Right cardiac atrium (tissue), 5 donors: ENCODE measurements at regions of chr17 and their contacts with region 1.

Region 1: DNA sequence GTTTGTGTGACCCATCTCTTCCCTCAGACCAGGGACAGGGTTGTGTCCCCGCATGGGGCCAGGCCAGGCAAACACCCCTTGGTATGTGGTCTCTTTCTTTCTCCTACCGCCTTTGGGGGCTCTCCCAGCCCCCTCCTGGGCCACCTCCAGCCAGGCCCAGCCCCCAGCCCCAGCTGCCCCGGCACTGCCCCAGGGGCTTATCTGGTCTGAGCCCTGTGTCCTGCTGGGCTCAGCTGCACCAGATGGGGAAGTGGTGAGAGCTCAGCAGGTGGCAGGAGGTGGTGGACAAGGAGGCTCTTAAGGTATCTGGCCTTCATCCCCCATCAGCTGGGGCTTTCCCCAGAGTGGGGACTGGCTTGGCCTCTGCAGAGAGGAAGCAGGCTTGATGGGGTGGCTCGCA is 8.7 kb downstream of the ADAM11 start:
- DNase-seq: peak in 2 of 3 donors; percentile 11 to 53
- ATAC-seq: no peak
- H3K4me3 ChIP-seq: no peak overlapping the region
- H3K27ac ChIP-seq: no peak overlapping the region
- H3K4me1 ChIP-seq: no peaks in the 10 kb centered on the region
- H3K27me3 ChIP-seq: no peaks in the 10 kb centered on the region

Region 2: DNA sequence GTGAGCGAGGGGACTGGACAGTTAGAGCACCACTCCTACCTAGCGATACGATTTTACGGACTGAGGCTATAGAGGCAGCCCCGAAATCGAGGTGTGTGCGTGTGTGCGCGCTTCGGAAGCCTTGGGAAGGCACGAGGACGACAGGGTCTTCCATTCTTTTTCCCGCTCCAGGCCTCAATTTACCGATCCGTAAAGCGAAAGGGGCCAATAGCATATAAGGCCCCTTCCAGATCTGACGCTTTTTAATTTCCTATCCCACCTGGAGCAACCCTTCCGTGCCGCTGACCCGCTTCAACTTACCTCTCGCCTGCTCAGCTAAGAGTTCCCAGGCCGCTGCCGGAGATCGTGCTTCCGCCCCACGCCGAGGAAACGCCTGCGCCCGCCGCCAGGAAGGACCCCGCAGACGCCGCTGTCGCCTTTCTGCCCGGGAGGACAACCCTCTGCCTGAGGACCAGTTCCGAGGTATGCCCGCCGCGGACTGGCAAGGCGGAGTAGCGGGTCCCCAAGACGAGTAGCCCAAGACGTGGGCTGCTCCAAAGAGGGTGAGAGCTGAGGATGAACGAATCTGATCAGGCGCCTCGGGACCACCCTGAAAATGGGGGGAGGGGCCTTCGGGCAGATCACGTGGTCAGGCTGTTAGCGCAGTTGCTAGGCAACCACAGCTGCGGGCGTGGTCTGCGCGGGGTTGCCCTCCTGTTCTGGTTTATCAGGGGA is 131.7 kb after region 1 on chr17 and contains the start of gene EFTUD2:
- intact Hi-C with region 1: no loop called
- DNase-seq: peak; percentile 93 to 98 (median 97)
- ATAC-seq: peak; percentile 94 to 95
- H3K4me3 ChIP-seq: peak within 1 kb of the TSS; percentile 74
- H3K27ac ChIP-seq: peak within 1 kb of the TSS; percentile 90
- H3K4me1 ChIP-seq: no peaks in the 10 kb centered on the region
- H3K27me3 ChIP-seq: no peaks in the 10 kb centered on the region
- total RNA-seq, gene EFTUD2: 54.8 to 73.0 (median 59.5) TPM

Region 3: DNA sequence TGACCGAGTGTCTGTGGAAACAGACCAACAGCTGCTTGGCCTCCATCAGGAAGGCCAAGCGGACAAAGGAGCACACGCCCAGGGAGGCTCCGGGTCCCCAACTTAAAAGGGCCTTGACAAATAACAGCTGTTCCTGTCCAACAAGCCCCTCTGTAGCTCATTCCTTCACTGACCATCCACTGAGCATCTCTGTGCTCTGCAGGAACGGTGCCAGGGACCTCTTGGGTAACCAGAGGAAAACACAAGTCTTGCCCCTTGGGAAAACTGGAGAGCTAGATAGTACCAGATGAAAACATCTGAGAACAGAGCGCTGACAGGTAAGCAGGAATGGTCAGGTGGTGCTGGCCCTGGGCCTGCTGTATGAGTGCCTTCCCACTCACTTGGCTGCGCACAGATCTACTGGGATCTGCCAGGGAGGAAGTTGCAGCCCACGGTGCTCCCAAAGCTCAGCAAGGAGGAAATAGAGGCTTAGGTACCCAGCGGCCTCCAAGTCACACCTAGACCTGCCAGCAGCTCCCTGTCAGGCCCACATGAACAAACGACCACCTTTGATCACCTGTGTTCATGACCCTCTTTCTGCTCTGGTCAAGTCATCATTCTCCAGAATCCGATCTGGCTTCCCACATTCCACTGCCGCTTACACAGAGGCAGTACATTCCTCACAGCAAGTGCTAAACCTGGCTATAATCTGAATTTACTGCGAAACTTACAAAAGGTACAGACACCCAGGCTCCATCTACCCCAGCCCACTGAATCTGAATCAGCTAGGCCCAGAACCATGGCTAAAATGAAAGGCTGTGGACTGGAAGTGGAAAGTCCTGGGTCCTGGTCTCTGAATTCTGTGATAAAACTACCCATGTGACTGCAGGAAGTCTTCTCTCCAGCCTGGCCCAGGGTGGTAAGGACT is 271.5 kb after region 1 on chr17:
- intact Hi-C with region 1: loop called in 1 of 4 experiments (anchors 10 kb)
- DNase-seq: peak in 2 of 3 donors; percentile 60 to 63
- ATAC-seq: no peak
- H3K4me3 ChIP-seq: no peak overlapping the region
- H3K27ac ChIP-seq: no peak overlapping the region
- H3K4me1 ChIP-seq: peaks cover 12% of the 10 kb centered on the region
- H3K27me3 ChIP-seq: no peaks in the 10 kb centered on the region